A673 (cell line): ENCODE measurements at regions of chr1 and their contacts with region 1.

Region 1: GRCh38 chr1:184166485-184166884 is 115.0 kb downstream of the TSEN15 start:
- DNase-seq: no peak
- H3K4me3 ChIP-seq: no peak overlapping the region
- H3K27ac ChIP-seq: no peak overlapping the region
- H3K4me1 ChIP-seq: peaks cover 11% of the 10 kb centered on the region
- H3K27me3 ChIP-seq: no peaks in the 10 kb centered on the region
- CTCF ChIP-seq: no peak

Region 2: GRCh38 chr1:184183919-184184318 is 17.4 kb after region 1 on chr1:
- CTCF ChIA-PET with region 1: no interaction called
- POLR2A ChIA-PET with region 1: no interaction called
- intact Hi-C with region 1: loop called (anchors 2 kb)
- DNase-seq: no peak
- H3K4me3 ChIP-seq: no peak overlapping the region
- H3K27ac ChIP-seq: no peak overlapping the region
- H3K4me1 ChIP-seq: no peaks in the 10 kb centered on the region
- H3K27me3 ChIP-seq: no peaks in the 10 kb centered on the region
- CTCF ChIP-seq: no peak